Mammary epithelial cell (primary cell): ENCODE measurements at regions of chr2 and their contacts with region 1.

Region 1: GRCh38 chr2:26542676-26543505 is 65.0 kb upstream of the OTOF start:
- DNase-seq: no peak
- H3K4me3 ChIP-seq: no peak overlapping the region
- H3K27ac ChIP-seq: no peak overlapping the region
- H3K4me1 ChIP-seq: no peaks in the 10 kb centered on the region
- H3K27me3 ChIP-seq: no peaks in the 10 kb centered on the region
- CTCF ChIP-seq: no peak

Region 2: GRCh38 chr2:26274058-26274613 is 268.8 kb before region 1 on chr2:
- CTCF ChIA-PET with region 1: no interaction called
- dilution Hi-C with region 1: no loop called
- in situ Hi-C with region 1: no loop called
- intact Hi-C with region 1: no loop called
- DNase-seq: peak; percentile 100
- H3K4me3 ChIP-seq: no peak overlapping the region
- H3K27ac ChIP-seq: peak overlapping the region; percentile 97
- H3K4me1 ChIP-seq: peaks cover 37% of the 10 kb centered on the region
- H3K27me3 ChIP-seq: no peaks in the 10 kb centered on the region
- CTCF ChIP-seq: no peak

Region 3: GRCh38 chr2:26369381-26370063 is 173.4 kb before region 1 on chr2:
- CTCF ChIA-PET with region 1: no interaction called
- dilution Hi-C with region 1: no loop called
- in situ Hi-C with region 1: no loop called
- intact Hi-C with region 1: no loop called
- DNase-seq: no peak
- H3K4me3 ChIP-seq: no peak overlapping the region
- H3K27ac ChIP-seq: no peak overlapping the region
- H3K4me1 ChIP-seq: no peaks in the 10 kb centered on the region
- H3K27me3 ChIP-seq: no peaks in the 10 kb centered on the region
- CTCF ChIP-seq: no peak

Region 4: DNA sequence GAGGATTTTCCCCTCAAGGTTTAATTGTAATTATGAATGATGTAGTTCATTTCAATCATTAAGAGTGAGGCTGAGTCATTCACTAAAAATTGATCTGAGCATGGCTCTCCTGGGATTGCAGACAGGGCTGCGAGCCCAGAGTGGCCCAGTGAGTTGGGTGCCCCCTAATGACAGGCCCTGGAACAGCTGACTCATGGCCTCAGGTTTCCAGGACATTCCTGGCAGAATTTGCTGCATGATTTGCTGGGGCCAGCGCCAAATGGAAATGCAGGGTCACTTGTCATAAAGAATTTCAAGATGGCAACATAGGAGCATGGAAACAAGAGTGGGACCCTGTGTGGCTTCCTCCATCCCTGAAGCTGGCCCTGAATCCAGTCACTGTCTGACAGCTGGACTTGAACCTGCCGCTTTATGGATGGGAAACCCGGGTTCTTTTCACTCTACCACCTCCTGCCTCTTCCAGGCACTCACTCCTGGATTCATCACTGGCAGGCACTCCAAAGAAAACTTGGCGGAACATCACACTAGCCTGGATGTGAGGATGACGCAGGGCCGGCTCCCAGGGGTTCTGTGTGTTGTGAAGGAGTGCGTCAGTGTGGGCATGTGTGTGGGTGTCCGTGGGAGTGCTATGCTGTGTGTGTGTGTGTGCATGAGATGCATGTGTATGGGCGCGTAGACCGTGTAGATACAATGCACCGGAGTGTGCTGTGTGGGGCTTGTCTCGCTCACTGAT is 80.2 kb before region 1 on chr2:
- CTCF ChIA-PET with region 1: no interaction called
- dilution Hi-C with region 1: no loop called
- in situ Hi-C with region 1: no loop called
- intact Hi-C with region 1: no loop called
- DNase-seq: peak; percentile 50
- H3K4me3 ChIP-seq: no peak overlapping the region
- H3K27ac ChIP-seq: no peak overlapping the region
- H3K4me1 ChIP-seq: no peaks in the 10 kb centered on the region
- H3K27me3 ChIP-seq: no peaks in the 10 kb centered on the region
- CTCF ChIP-seq: peak; percentile 71 to 93

Region 5: DNA sequence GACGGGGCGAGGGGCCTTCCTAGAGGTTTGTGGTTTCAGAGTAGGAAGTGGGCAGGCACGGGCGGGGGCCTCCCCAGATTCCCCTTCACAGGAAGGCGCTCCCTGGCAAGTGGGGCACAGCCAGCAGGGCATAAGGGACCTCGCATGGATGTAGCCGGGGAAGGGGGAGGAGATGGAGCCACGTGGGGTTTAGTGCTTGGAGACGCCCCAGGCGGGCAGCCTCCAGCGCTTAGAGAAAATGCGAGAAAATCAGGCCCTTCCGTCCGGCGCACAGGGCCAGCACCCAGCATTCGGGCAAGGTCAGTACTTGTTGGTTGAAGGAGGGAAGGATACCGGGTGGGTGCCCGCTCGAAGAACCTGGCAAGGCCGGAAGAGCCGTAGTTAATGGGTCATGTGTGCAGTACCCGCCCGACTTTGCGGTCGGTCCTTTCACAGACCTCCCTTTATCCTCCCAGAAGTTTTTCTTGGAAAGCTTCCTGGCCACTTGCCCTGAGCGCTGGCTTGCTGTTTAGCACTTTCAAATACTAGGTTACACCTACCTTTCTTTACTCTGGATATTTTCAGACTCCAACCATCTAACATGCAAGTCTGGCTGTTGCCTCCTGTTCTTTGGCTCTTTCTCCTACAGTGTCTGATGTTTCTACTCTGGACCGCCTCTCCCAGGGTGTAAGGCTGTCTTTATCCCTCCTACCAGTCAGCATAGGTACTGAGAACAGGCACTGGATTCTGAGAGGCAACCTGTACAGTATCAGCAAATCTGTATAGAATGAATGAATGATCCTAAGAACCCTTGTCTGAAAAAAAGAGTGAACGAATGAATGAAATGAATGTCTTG is 20.1 kb after region 1 on chr2:
- CTCF ChIA-PET with region 1: no interaction called
- dilution Hi-C with region 1: no loop called
- in situ Hi-C with region 1: no loop called
- intact Hi-C with region 1: loop called (anchors 1 kb)
- DNase-seq: peak; percentile 85
- H3K4me3 ChIP-seq: peak overlapping the region; percentile 36 to 48 (median 45)
- H3K27ac ChIP-seq: peak overlapping the region; percentile 3
- H3K4me1 ChIP-seq: peaks cover 20% of the 10 kb centered on the region
- H3K27me3 ChIP-seq: peaks cover 2% of the 10 kb centered on the region
- CTCF ChIP-seq: no peak

Region 6: GRCh38 chr2:26764078-26764887 is 221.4 kb after region 1 on chr2 and contains the start of gene SLC35F6:
- CTCF ChIA-PET with region 1: no interaction called
- dilution Hi-C with region 1: no loop called
- in situ Hi-C with region 1: no loop called
- intact Hi-C with region 1: no loop called
- DNase-seq: peak; percentile 70
- H3K4me3 ChIP-seq: peak within 1 kb of the TSS; percentile 69 to 79 (median 75)
- H3K27ac ChIP-seq: peak within 1 kb of the TSS; percentile 68
- H3K4me1 ChIP-seq: peaks cover 23% of the 10 kb centered on the region
- H3K27me3 ChIP-seq: no peaks in the 10 kb centered on the region
- CTCF ChIP-seq: no peak
- total RNA-seq, gene SLC35F6: 57.2 to 125 TPM